Right ventricle myocardium superior (tissue), 1 donor: ENCODE measurements at regions of chr12 and their contacts with region 1.

Region 1: DNA sequence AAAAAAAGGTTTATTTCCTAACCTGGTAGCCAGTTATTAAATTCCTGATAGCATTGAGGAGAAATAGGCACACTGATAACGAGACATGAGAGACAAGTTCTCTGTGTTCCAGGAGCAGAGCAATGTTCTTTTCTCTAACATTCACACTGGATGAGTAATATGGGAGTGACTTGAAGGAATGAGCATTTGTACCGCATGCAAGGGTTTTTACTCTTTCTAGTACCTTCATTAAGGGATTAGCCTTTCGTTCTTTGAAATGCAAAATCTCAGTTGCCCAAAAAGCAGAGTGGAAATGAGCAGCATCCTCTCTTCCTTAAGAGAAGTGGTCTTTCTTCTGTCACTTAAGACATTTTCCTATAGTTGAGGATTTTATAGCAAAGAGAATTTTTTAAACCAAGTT is 54.7 kb downstream of the FGD4 start:
- DNase-seq: no peak
- ATAC-seq: no peak

Region 2: DNA sequence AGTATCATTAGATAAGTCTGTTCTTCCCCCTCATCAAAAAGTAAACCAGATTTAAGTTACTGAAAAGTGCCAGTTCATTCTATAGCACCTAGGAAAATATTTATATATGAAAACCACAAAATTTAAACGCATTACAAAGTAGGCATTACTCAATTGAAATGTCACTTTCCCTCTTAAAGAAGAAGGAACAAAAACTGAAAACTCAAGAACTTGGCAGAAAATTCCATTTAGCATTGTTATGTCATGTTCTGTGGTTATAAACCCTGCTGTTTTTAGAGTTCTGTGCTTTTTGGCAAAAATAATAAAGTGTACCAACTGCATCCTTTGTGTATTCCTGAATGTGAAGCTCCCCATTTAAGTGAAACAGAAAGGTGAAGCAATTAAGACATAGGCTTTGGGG is 51.1 kb before region 1 on chr12:
- intact Hi-C with region 1: no loop called
- DNase-seq: no peak
- ATAC-seq: no peak

Region 3: GRCh38 chr12:32659908-32660440 is 205.9 kb after region 1 on chr12:
- intact Hi-C with region 1: loop called (anchors 5 kb)
- DNase-seq: no peak
- ATAC-seq: no peak